SK-N-SH (cell line): ENCODE measurements at regions of chr5 and their contacts with region 1.

Region 1: GRCh38 chr5:141878711-141879425 is 658 bp upstream of the PCDH1 start:
- DNase-seq: peak; percentile 74
- H3K4me3 ChIP-seq: peak overlapping the region; percentile 55 to 63
- H3K27ac ChIP-seq: no peak overlapping the region; a peak in 1 of 4 replicates
- H3K4me1 ChIP-seq: peaks cover 4 to 69% of the 10 kb centered on the region in 2 experiments; a peak in 2 of 4 replicates
- H3K27me3 ChIP-seq: peaks cover 78% of the 10 kb centered on the region
- CTCF ChIP-seq: peak; percentile 96
- EP300 ChIP-seq: no peak
- RAD21 ChIP-seq: peak; percentile 95

Region 2: DNA sequence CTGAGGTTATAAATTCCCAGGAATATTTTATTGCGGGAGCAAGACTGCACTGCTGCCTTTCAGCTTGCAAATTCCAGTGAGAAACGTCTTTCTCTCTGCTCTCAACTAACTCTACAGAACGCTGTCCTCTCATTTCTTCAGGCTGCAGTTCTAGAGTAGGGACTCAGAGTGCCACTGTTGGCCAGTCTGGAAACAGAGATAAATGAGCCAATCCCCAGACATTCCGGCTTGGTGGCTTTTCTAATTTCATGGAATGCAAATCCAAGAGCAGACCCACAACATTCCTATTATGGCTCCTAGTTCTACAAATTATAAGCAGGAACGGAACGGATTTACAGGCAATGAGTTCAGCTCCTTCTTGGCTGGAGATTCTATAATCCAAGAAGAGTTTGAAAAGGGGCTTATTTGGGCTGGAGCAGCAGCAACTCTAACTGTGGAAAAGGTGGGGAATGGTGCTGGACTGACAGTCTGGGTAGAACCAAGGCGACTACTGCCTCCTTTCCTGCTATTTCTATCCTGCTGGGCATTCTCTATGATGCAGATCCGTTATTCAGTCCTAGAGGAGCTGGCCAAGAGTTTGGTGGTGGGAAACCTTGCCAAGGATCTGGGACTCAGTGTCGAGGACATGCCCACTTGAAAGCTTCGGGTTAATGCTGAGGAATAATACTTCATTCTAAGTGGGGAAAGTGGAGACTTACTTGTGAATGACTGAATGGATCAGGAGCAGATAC is 439.3 kb before region 1 on chr5:
- CTCF ChIA-PET with region 1: no interaction called
- POLR2A ChIA-PET with region 1: no interaction called
- DNase-seq: no peak
- H3K4me3 ChIP-seq: no peak overlapping the region; a peak in 1 of 4 replicates
- H3K27ac ChIP-seq: no peak overlapping the region
- H3K4me1 ChIP-seq: no peaks in the 10 kb centered on the region
- H3K27me3 ChIP-seq: no peaks in the 10 kb centered on the region
- CTCF ChIP-seq: 0 out of 2 replicates have a peak, but pooled peaks have one; percentile 7
- EP300 ChIP-seq: no peak
- RAD21 ChIP-seq: no peak

Region 3: DNA sequence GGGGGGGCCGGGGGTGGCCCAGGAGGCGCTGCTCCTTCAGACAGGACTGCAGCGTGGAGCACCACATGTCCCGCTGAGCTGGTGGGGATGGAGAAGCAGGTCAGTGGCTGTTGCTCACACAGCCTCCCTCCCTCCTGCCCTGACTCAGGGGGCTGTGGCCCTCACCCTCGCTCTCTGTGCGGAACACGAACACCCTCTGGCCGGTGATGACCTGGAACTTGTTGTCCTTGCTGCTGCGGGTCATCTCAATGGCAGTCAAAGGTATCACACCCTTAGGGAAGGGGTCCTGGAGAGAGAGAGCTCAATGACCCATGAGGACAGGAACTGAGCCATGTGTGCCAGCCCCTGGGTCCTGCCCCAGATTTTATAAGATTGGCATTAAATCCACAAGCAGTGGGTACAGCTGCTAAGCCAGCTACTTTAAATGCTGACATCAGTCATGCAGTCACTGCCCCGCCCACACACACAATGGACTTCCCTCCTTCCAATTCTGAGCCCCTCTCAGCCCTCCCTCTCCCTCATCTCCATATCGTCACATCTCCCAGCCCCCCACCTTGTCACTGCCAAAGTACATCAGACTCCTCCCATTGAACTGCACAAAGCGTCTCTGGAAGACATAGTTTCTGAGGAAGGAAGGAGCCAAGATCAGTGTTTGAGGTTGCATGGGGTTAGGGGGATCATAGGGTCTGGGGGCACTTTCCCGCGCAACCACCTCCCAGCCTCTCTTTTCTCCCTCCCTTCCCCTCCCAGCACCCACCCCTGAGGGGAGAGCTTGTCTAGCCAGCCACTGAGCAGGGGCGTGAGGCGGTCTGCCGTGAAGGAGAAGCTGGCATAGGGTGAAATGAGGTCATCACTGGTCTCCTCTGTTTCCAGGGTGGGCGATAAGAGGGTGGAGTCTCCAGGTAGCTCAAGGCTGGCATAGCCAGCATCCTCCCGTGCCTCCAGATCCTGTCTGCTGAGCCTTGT is 205.7 kb before region 1 on chr5:
- CTCF ChIA-PET with region 1: interaction called, 10 read pairs
- POLR2A ChIA-PET with region 1: no interaction called
- DNase-seq: no peak
- H3K4me3 ChIP-seq: no peak overlapping the region
- H3K27ac ChIP-seq: no peak overlapping the region
- H3K4me1 ChIP-seq: no peaks in the 10 kb centered on the region
- H3K27me3 ChIP-seq: no peaks in the 10 kb centered on the region
- CTCF ChIP-seq: no peak
- EP300 ChIP-seq: no peak
- RAD21 ChIP-seq: no peak

Region 4: DNA sequence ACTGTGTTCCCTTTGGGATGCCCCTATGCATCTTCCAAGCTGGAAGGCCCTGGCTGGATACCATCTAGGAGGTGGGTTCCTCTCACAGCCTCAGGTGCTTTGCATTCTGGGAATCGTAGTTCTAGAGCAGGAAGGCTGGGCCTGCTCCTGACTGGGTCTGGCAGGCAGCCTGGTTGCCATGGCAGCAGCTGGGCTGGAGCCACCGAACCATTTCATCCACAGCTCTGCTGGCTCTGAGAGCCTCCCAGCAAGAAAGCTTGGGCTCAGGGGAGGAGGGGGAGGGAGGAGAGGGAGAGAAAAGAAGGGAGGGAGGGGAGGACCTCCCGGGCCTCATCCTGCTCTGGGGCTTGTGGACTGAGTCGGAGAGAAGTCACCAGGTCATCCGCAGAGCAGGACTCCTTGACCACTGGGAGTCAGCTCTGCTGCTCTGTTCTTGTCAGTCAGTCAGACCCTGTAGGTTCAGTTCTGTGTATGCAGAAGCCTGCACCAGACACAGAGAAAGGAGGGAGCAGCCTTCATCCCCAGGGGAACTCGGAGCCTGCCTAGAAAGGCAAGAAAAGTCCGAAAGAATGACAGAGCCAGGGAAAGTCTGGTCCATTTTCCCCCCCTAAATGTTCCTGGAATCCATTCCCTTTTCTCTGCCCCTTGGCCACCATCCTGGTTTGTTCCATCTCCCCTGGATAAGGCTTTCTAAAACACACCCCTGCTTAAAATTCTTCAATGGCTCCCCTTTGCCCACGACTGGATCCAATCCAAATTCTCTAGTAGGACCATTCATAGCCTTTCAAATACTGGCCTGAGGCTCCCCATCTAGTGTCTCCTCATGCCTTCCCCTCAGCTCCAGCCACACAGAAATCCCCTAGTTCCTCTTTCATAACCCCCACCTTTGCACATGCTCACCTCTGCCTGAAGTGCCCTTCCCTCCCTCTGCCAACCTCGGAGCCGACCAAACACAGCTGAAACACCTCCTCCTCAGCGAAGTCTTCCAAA is 131.4 kb before region 1 on chr5:
- CTCF ChIA-PET with region 1: interaction called, 13 read pairs
- POLR2A ChIA-PET with region 1: no interaction called
- DNase-seq: peak; percentile 91
- H3K4me3 ChIP-seq: no peak overlapping the region
- H3K27ac ChIP-seq: peak overlapping the region in 1 of 2 experiments; percentile 89; a peak in 2 of 4 replicates
- H3K4me1 ChIP-seq: peaks cover 0 to 38% of the 10 kb centered on the region in 2 experiments; a peak in 2 of 4 replicates
- H3K27me3 ChIP-seq: no peaks in the 10 kb centered on the region; the same call in 1 of the 2 replicates
- CTCF ChIP-seq: no peak
- EP300 ChIP-seq: no peak; a peak in 1 of 4 replicates
- RAD21 ChIP-seq: peak; percentile 14; the same call in 1 of the 2 replicates

Region 5: GRCh38 chr5:141825791-141826560 is 52.9 kb before region 1 on chr5:
- CTCF ChIA-PET with region 1: interaction called, 128 read pairs
- POLR2A ChIA-PET with region 1: interaction called, 13 read pairs
- DNase-seq: peak; percentile 64
- H3K4me3 ChIP-seq: no peak overlapping the region; a peak in 1 of 4 replicates
- H3K27ac ChIP-seq: peak overlapping the region in 1 of 2 experiments; percentile 66; a peak in 2 of 4 replicates
- H3K4me1 ChIP-seq: peaks cover 8 to 42% of the 10 kb centered on the region in 2 experiments; a peak in 2 of 4 replicates
- H3K27me3 ChIP-seq: peaks cover 7% of the 10 kb centered on the region
- CTCF ChIP-seq: peak; percentile 55
- EP300 ChIP-seq: no peak
- RAD21 ChIP-seq: peak; percentile 44

Region 6: GRCh38 chr5:141866149-141867120 is 12.4 kb before region 1 on chr5:
- CTCF ChIA-PET with region 1: interaction called, 12 read pairs
- POLR2A ChIA-PET with region 1: no interaction called
- DNase-seq: no peak
- H3K4me3 ChIP-seq: no peak overlapping the region
- H3K27ac ChIP-seq: no peak overlapping the region
- H3K4me1 ChIP-seq: peaks cover 0 to 9% of the 10 kb centered on the region in 2 experiments; a peak in 1 of 4 replicates
- H3K27me3 ChIP-seq: peaks cover 40% of the 10 kb centered on the region
- CTCF ChIP-seq: no peak
- EP300 ChIP-seq: no peak
- RAD21 ChIP-seq: no peak

Region 7: DNA sequence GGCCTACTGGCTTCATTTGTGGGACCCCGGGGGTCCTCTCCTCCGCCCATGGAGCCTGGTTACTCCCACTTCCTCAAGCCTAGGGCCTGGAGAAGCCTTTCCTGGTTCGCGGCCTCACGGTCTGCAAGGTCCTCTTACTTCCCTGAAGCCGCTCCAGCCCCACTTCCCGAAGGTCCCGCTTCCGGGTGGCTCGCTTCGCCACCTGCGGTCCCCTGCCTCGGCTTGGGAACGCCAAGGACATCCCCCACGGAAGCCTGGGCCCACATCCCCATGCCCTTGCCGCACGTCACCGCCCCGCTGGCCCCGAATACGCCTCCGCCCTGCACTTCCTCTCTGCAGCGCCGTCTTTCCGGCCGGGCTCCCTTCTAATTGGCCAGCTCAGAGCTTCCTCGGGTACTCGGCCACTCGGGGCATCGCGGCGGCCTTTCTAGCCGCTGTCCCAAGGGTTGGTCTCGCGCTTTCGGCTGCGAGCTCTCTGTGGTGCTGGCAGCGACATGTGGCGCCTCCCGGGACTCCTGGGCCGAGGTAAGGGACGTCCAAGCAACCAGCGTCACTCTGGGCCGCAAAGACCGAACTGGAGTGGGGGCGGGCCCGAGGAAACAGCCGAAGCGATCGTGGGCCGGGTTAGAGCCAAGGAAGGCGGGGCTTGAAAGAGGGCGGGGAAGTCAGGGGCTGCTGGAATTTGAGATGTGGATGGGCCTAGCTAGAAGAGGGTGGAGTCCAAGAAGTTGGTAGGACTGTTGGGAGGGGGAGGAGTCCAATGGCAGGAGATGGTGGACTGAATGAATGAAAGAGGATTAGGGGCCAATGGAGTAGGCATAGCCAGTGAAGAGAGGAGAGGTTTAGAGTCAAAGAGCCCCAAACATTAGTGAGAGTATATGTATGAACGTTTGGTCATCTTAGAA is 44.8 kb after region 1 on chr5 and contains the start of gene DELE1:
- CTCF ChIA-PET with region 1: interaction called, 16 read pairs
- POLR2A ChIA-PET with region 1: interaction called, 15 read pairs
- DNase-seq: peak; percentile 95
- H3K4me3 ChIP-seq: peak within 1 kb of the TSS; percentile 87 to 96
- H3K27ac ChIP-seq: peak within 1 kb of the TSS; percentile 98 to 99
- H3K4me1 ChIP-seq: peaks cover 0 to 8% of the 10 kb centered on the region in 2 experiments; a peak in 2 of 4 replicates
- H3K27me3 ChIP-seq: no peaks in the 10 kb centered on the region
- CTCF ChIP-seq: no peak
- EP300 ChIP-seq: peak in 1 of 2 experiments; percentile 36; a peak in 1 of 4 replicates
- RAD21 ChIP-seq: no peak
- polyA plus RNA-seq, gene DELE1: 60.3 and 78.8 TPM in 2 replicates

Region 8: GRCh38 chr5:142024771-142025304 is 146.0 kb after region 1 on chr5:
- CTCF ChIA-PET with region 1: no interaction called
- POLR2A ChIA-PET with region 1: no interaction called
- DNase-seq: peak; percentile 93
- H3K4me3 ChIP-seq: peak overlapping the region; percentile 47 to 56
- H3K27ac ChIP-seq: peak overlapping the region; percentile 72 to 98
- H3K4me1 ChIP-seq: peaks cover 3 to 7% of the 10 kb centered on the region in 2 experiments; a peak in 3 of 4 replicates
- H3K27me3 ChIP-seq: no peaks in the 10 kb centered on the region
- CTCF ChIP-seq: no peak
- EP300 ChIP-seq: no peak
- RAD21 ChIP-seq: no peak